Activated CD4-positive, alpha-beta T cell treated with anti-CD3 and anti-CD28 coated beads for 36 hours (primary cell): ENCODE measurements at regions of chr1 and their contacts with region 1.

Region 1: DNA sequence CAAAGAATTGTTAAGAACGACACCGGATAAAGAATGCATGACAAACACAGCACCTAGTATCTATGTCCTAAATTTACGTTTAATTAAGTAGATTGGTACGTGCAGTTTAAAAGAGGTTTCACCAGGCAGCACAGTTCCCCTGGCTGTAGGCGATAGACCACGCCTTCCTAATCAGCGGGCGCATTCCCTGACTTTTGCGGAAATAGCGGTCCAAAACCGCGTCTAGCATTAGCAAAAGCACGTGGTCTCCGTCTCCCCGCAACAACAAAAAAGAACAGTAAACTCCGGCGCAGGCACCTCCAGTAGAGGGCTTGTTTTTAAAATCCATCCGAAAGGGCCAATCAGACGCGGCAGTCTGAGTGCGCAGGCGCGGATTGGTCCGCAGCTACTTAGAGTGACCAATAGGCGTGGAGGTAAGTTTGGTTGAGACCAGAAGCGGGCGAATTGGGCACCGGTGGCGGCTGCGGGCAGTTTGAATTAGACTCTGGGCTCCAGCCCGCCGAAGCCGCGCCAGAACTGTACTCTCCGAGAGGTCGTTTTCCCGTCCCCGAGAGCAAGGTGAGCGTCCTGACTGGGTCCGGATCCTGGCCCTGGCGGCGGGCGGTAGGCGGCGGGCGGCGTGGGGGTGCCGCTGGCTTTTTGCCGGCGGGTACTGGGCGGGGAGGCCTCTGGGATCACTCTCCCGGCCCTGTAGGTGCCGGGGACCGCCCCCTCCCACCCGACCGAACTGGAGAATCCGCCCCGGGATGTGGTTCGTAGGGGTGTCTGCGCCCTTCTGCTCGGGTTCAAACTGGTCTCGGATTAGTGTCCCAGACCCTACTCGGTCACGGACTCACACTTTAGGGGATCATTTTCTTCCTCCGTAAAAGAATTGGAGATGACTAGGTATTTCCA is at the start of gene CENPF:
- DNase-seq: peak; percentile 96
- ATAC-seq: peak; percentile 98
- H3K4me3 Mint-ChIP-seq: peak within 1 kb of the TSS; percentile 95
- H3K27ac Mint-ChIP-seq: peak within 1 kb of the TSS; percentile 89
- H3K4me1 Mint-ChIP-seq: peaks cover 20% of the 10 kb centered on the region
- H3K27me3 Mint-ChIP-seq: no peaks in the 10 kb centered on the region
- total RNA-seq, gene CENPF: 102 to 107 TPM

Region 2: GRCh38 chr1:214213136-214213535 is 389.9 kb before region 1 on chr1:
- CTCF ChIA-PET with region 1: no interaction called
- POLR2A ChIA-PET with region 1: no interaction called
- intact Hi-C with region 1: loop called in 1 of 2 experiments (anchors 5 kb)
- DNase-seq: no peak
- ATAC-seq: no peak
- H3K4me3 Mint-ChIP-seq: no peak overlapping the region
- H3K27ac Mint-ChIP-seq: no peak overlapping the region
- H3K4me1 Mint-ChIP-seq: peaks cover 4% of the 10 kb centered on the region
- H3K27me3 Mint-ChIP-seq: peaks cover 13% of the 10 kb centered on the region

Region 3: DNA sequence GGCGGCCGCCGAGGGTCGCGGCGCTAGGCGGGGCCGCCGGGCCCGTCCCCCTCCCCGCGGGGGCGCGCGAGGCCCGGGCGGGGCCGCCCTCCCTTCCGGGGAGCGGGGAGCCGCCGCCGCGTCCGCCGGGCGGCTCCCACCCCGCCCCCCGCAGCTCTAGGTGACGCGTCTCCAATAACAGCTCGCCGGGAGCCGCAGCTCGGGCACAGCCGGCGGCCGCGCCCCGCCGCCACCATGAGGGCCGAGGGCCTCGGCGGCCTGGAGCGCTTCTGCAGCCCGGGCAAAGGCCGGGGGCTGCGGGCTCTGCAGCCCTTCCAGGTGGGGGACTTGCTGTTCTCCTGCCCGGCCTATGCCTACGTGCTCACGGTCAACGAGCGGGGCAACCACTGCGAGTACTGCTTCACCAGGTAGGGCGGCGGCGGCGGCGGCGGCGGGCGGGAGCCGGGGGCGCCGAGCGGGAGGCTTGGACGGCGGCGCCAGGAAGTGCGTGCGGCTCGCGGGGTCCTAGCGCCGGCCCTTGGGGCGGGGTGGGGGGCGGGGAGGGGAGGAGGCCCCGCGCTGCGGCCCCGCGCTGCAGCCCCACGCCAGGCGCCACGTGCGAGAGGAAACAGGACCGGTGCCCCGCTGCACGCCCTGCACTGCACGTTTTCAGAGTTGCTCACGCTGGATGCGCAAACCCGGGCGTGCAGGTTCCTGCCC is 321.8 kb before region 1 on chr1 and contains the start of gene SMYD2:
- CTCF ChIA-PET with region 1: no interaction called
- POLR2A ChIA-PET with region 1: no interaction called
- intact Hi-C with region 1: loop called (anchors 1 to 2 kb)
- DNase-seq: peak; percentile 82
- ATAC-seq: peak; percentile 74
- H3K4me3 Mint-ChIP-seq: peak within 1 kb of the TSS; percentile 92
- H3K27ac Mint-ChIP-seq: peak within 1 kb of the TSS; percentile 89
- H3K4me1 Mint-ChIP-seq: peaks cover 37% of the 10 kb centered on the region
- H3K27me3 Mint-ChIP-seq: no peaks in the 10 kb centered on the region
- total RNA-seq, gene SMYD2: 38.2 to 40.1 TPM

Region 4: GRCh38 chr1:214427871-214428277 is 175.1 kb before region 1 on chr1:
- CTCF ChIA-PET with region 1: no interaction called
- POLR2A ChIA-PET with region 1: interaction called, 3 read pairs
- intact Hi-C with region 1: loop called (anchors 1 to 5 kb)
- DNase-seq: peak; percentile 84
- ATAC-seq: peak; percentile 99
- H3K4me3 Mint-ChIP-seq: peak overlapping the region; percentile 36
- H3K27ac Mint-ChIP-seq: peak overlapping the region; percentile 91
- H3K4me1 Mint-ChIP-seq: peaks cover 28% of the 10 kb centered on the region
- H3K27me3 Mint-ChIP-seq: no peaks in the 10 kb centered on the region

Region 5: DNA sequence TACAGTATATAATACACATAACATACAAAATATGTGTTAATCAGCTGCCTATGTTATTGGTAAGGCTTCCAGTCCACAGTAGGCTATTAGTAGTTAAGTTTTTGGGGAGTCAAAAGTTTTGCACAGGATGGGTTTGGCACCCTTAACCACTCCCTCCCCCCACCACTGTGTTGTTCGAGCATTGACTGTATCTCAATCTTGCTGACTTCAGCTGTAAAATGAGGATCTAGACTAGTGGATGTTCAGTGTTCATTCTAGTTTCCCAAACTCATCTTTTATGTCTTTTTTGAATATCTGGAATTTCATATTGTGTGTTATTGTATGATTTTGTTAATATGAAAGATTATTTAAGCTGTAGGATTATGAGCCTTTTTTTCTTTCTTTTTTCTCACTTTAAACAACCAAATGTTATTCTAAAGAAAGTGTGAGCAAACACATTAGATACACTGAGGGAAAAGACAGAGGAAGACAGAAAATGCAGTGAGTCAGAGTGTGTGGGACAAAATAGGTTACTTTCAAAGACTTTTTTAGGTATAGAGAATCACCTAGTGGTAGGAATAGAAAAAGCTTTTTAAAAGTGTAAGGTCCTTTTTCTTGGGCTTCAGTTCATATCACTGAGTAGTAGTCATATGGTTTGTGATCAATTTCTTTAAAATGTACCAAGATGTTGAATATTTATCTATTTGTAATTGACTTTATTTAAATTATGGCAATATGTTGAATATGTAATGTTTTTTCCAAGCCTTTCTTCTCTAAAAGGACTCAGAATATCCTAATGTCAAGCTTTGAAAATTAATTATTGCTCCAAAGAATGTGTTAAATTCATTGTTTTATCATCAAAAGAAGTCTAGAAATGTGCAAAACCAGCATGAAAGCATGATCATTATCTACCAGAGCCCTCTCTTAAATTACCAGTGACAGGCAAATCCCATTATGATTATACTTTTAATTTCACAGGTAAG is 17.9 kb before region 1 on chr1:
- CTCF ChIA-PET with region 1: no interaction called
- POLR2A ChIA-PET with region 1: no interaction called
- intact Hi-C with region 1: no loop called
- DNase-seq: no peak
- ATAC-seq: peak; percentile 89
- H3K4me3 Mint-ChIP-seq: no peak overlapping the region
- H3K27ac Mint-ChIP-seq: no peak overlapping the region
- H3K4me1 Mint-ChIP-seq: peaks cover 6% of the 10 kb centered on the region
- H3K27me3 Mint-ChIP-seq: peaks cover 3% of the 10 kb centered on the region

Region 6: GRCh38 chr1:214637722-214638458 is 34.9 kb after region 1 on chr1:
- CTCF ChIA-PET with region 1: interaction called, 4 read pairs
- POLR2A ChIA-PET with region 1: interaction called, 4 read pairs
- intact Hi-C with region 1: loop called in 1 of 2 experiments (anchors 5 kb)
- DNase-seq: peak; percentile 34
- ATAC-seq: peak; percentile 42
- H3K4me3 Mint-ChIP-seq: no peak overlapping the region
- H3K27ac Mint-ChIP-seq: peak overlapping the region; percentile 53
- H3K4me1 Mint-ChIP-seq: peaks cover 8% of the 10 kb centered on the region
- H3K27me3 Mint-ChIP-seq: no peaks in the 10 kb centered on the region

Region 7: GRCh38 chr1:215566556-215567490 is 963.8 kb after region 1 on chr1 and contains the start of gene KCTD3:
- CTCF ChIA-PET with region 1: no interaction called
- POLR2A ChIA-PET with region 1: no interaction called
- intact Hi-C with region 1: loop called in 1 of 2 experiments (anchors 1 kb)
- DNase-seq: peak; percentile 76
- ATAC-seq: peak; percentile 60
- H3K4me3 Mint-ChIP-seq: peak within 1 kb of the TSS; percentile 92
- H3K27ac Mint-ChIP-seq: peak within 1 kb of the TSS; percentile 87
- H3K4me1 Mint-ChIP-seq: peaks cover 30% of the 10 kb centered on the region
- H3K27me3 Mint-ChIP-seq: peaks cover 8% of the 10 kb centered on the region
- total RNA-seq, gene KCTD3: 4.0 to 4.2 TPM